RWPE1 (cell line): ENCODE measurements at regions of chr12 and their contacts with region 1.

Region 1: GRCh38 chr12:113980537-113981337 is 14.6 kb upstream of the RBM19 start:
- DNase-seq: peak; percentile 49
- H3K27ac ChIP-seq: no peak overlapping the region
- CTCF ChIP-seq: peak; percentile 93

Region 2: GRCh38 chr12:114476159-114476558 is 495.4 kb after region 1 on chr12:
- CTCF ChIA-PET with region 1: interaction called, 12 read pairs
- POLR2A ChIA-PET with region 1: no interaction called
- DNase-seq: no peak
- H3K27ac ChIP-seq: no peak overlapping the region
- CTCF ChIP-seq: peak; percentile 23; the same call in 1 of the 2 replicates

Region 3: DNA sequence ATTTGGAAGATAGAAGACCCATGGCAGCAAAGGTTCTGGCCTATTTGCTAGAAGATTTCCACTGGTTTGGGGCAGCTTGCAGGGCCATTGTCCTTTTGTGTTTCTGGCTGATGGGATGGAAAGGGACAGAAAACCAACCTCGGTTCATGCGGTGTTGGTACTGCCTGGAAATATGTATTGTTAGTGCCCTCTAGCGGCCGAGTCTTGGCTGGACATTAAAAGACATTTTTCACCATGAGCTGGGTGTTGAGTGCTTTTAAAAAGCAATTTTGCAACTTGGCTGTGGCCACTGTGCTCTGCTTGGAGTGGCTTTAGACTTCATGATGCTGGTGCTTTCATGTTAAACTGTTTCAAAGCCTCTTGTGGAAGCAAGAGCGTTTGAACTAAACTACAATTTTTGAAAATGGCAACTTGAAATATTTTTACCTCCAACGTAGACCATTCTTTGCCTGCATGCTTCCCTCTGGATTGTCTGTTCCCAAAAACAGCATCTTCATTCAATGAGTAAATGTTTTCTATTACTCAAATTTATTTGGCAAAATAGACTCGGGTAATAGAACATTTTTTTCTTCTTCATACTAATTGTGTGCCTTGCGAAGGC is 527.9 kb after region 1 on chr12:
- CTCF ChIA-PET with region 1: interaction called, 21 read pairs
- POLR2A ChIA-PET with region 1: no interaction called
- DNase-seq: peak; percentile 59
- H3K27ac ChIP-seq: no peak overlapping the region
- CTCF ChIP-seq: peak; percentile 77